Esophagus muscularis mucosa (tissue), 4 donors: ENCODE measurements at regions of chr17 and their contacts with region 1.

Region 1: DNA sequence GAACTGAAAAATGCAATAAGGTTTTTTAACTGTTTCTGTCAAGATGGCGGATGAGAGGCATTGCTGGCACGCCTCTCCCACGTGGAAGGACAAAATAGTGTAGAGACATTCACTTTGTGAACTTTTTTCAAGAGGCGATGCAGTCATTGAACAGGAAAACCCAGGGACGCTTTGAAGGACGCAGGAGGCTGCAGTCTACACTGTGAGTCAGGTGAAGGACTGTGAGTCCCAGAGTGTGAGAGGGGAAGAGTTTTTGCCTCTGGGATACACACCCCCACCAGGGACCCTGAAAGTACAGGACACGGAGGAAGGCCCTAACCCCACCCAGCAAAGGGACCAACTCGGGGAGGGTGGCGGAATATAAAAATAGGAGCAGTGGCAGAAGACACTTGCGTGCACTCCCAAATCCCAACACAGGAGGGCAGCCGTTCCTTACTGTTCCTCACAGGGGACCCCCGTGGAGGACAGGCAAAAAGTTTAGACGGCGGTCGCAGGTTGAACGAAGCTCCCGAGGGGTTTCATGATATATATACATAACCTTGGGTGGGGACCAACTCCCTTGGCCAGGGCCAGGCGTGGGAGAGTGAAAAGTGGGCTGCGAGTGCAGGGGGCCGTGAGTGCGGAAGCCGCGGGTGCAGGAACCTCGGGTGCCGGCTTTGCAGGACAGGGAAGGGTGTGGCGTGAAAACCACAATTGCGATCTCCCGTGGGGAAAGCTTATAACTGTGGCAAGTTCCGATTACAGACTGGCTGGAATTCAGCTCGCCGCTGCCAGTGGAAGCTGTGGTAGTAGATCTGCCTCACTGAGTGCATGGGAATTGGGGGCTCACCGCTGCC is 82.0 kb upstream of the ALOX12 start:
- DNase-seq: no peak
- H3K4me3 ChIP-seq: peak overlapping the region; percentile 18 to 43 (median 25)
- H3K27ac ChIP-seq: no peak overlapping the region
- H3K4me1 ChIP-seq: peaks cover 6 to 12% (median 10%) of the 10 kb centered on the region in 4 donors
- H3K27me3 ChIP-seq: peaks cover 0 to 46% (median 2%) of the 10 kb centered on the region in 4 donors
- CTCF ChIP-seq: peak; percentile 72 to 86 (median 83)
- EP300 ChIP-seq: no peak
- POLR2A ChIP-seq: no peak

Region 2: DNA sequence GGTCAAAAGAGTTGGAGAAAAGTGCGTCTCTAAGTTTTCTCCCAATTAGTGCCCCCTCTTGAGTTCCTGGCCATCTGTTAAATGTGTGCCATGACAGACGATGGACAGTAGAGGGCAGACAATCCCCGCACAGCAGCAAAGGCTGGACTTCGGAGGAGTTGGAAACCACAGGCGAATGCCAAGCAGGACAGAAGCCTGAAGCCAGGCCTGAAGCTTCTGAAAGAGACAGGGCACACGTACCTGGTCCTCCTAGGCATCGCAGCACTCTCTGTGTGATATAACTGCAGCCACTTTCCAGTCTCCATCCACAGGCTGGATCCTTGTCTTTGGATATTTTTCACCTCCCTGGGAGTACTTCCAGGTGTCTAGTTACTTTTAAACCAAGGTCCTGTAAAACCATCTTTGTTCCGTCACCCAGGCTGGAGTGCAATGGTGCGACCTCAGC is 247.7 kb before region 1 on chr17:
- intact Hi-C with region 1: loop called (anchors 5 kb)
- DNase-seq: no peak
- H3K4me3 ChIP-seq: no peak overlapping the region
- H3K27ac ChIP-seq: no peak overlapping the region
- H3K4me1 ChIP-seq: peaks cover 0 to 3% (median 0%) of the 10 kb centered on the region in 4 donors
- H3K27me3 ChIP-seq: peaks cover 0 to 48% (median 0%) of the 10 kb centered on the region in 4 donors
- CTCF ChIP-seq: peak; percentile 82 to 92 (median 88)
- EP300 ChIP-seq: no peak
- POLR2A ChIP-seq: no peak

Region 3: DNA sequence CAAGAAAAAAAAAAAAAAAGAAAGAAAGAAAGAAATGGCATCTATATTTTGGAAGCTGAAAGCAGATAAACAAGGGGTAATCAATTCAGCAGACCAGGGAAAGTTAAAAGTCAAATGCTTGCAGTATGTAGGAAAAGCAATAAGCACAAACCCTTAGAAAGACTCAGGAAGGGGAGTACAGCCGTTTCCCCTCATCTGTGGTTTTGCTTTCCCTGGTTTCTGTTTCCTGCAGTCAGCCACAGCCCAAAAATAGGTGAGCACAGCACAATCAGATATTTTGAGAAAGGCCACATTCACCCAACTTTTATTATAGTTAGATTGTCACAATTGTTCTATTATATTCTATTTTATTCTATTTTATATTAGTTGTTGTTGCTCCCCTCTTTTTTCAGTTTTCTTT is 67.6 kb after region 1 on chr17:
- intact Hi-C with region 1: no loop called
- DNase-seq: no peak
- H3K4me3 ChIP-seq: no peak overlapping the region
- H3K27ac ChIP-seq: no peak overlapping the region
- H3K4me1 ChIP-seq: no peaks in the 10 kb centered on the region
- H3K27me3 ChIP-seq: no peaks in the 10 kb centered on the region
- CTCF ChIP-seq: no peak
- EP300 ChIP-seq: no peak
- POLR2A ChIP-seq: no peak

Region 4: DNA sequence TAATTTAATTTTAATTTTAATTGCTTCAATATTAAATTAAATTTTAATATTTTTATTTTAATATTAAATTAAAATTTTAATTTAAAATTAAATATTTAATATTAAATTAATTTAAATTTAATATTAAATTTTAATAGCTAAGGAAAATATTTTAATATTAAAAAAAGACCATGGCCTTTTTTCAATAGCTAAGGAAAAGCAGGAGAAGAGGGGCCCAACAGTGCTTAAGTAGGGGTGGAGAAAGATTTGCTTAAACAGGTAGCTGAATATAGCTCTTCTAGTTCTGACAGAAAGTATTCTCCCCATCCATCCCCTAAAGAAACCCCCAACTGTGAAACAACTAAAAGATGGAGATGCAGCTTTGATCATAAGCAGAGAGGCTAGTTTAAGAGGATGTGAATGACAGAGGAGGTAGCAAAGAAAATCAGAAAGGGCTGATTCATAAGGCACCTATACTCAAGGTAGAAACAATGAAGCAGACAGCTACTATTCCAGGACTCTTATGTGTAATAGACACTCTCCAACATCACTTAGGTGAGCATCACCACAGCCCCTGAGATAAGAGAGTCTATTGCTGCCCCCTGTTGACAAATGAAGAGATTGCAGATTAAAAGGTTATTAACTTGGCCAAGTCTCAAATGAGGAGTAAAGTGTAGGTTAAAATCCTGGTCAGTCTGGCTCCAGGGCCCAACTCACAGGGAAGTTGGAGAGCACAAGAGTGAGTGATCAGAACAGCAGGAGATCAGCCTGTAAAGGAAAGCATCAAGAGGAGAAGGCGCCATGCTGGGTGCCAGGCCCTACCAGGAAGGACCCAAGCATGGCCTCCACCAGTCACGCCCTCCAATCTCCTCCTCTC is 90.8 kb after region 1 on chr17:
- intact Hi-C with region 1: loop called (anchors 2 kb)
- DNase-seq: no peak
- H3K4me3 ChIP-seq: no peak overlapping the region
- H3K27ac ChIP-seq: no peak overlapping the region
- H3K4me1 ChIP-seq: peaks cover 0 to 21% (median 6%) of the 10 kb centered on the region in 4 donors
- H3K27me3 ChIP-seq: no peaks in the 10 kb centered on the region
- CTCF ChIP-seq: peak; percentile 64 to 77 (median 67)
- EP300 ChIP-seq: no peak
- POLR2A ChIP-seq: no peak

Region 5: DNA sequence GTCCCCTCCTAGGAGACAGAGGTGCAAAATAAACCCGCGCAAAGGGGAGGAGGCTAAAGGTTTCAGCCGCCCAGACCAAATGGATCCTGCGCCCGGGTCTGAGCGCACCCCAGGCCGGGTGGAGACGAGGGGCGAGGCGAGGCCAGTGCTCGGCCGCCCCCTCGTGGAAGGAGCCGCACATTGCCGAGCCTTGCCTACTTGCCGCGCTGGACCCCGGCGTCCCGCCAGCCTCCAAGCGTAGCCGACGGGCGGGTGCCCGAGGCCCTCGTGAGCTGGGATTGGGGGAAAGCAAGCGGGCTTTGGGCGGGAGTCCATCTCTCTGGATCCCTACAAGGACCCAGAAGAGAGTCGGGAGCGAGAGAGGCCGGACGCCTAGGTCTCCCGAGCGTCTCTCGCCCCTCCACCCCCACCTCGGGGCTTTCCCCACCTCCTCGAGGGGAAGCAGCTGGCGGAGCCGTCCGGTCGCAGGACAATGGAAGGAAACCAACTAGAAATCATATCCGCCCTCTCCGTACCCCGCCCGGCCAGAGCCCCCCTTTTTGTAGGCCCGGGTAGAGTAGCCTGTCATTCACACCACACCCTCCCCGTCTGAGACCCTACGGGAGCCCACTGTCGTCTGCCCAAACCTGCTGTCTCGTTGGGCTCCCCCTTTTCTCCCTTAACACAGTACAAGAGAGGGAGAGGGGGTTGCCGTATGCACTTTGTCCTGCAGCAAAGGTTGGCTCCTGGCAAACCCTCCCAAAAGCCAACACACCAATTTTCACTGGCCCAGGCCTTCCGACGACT is 108.4 kb after region 1 on chr17:
- intact Hi-C with region 1: loop called (anchors 5 kb)
- DNase-seq: peak; percentile 94
- H3K4me3 ChIP-seq: peak overlapping the region; percentile 34 to 54 (median 40)
- H3K27ac ChIP-seq: peak overlapping the region; percentile 58 to 80 (median 74)
- H3K4me1 ChIP-seq: peaks cover 54 to 73% (median 66%) of the 10 kb centered on the region in 4 donors
- H3K27me3 ChIP-seq: peaks cover 0 to 35% (median 17%) of the 10 kb centered on the region in 4 donors
- CTCF ChIP-seq: peak; percentile 92 to 100 (median 93)
- EP300 ChIP-seq: no peak
- POLR2A ChIP-seq: no peak

Region 6: GRCh38 chr17:7136266-7136877 is 222.5 kb after region 1 on chr17:
- intact Hi-C with region 1: loop called (anchors 5 kb)
- DNase-seq: no peak
- H3K4me3 ChIP-seq: no peak overlapping the region
- H3K27ac ChIP-seq: no peak overlapping the region
- H3K4me1 ChIP-seq: peaks cover 2 to 18% (median 8%) of the 10 kb centered on the region in 4 donors
- H3K27me3 ChIP-seq: peaks cover 0 to 86% (median 13%) of the 10 kb centered on the region in 4 donors
- CTCF ChIP-seq: peak; percentile 94 to 96 (median 94)
- EP300 ChIP-seq: no peak
- POLR2A ChIP-seq: no peak